Stomach (tissue), 19 donors: ENCODE measurements at regions of chr17 and their contacts with region 1.

Region 1: GRCh38 chr17:77109764-77110359 is 30.9 kb upstream of the SEC14L1 start:
- DNase-seq: peak in 1 of 2 donors; percentile 62
- H3K4me3 ChIP-seq: no peak overlapping the region
- H3K27ac ChIP-seq: peak overlapping the region; percentile 4 to 75 (median 69)
- H3K4me1 ChIP-seq: peaks cover 10 to 39% (median 26%) of the 10 kb centered on the region in 4 donors
- H3K27me3 ChIP-seq: no peaks in the 10 kb centered on the region
- CTCF ChIP-seq: no peak
- EP300 ChIP-seq: no peak
- POLR2A ChIP-seq: no peak

Region 2: GRCh38 chr17:77153472-77153871 is 43.6 kb after region 1 on chr17:
- intact Hi-C with region 1: loop called (anchors 10 kb)
- DNase-seq: no peak
- H3K4me3 ChIP-seq: no peak overlapping the region
- H3K27ac ChIP-seq: peak overlapping the region in 4 of 5 donors; percentile 36 to 65 (median 57)
- H3K4me1 ChIP-seq: peaks cover 42 to 90% (median 64%) of the 10 kb centered on the region in 4 donors
- H3K27me3 ChIP-seq: no peaks in the 10 kb centered on the region
- CTCF ChIP-seq: no peak
- EP300 ChIP-seq: no peak
- POLR2A ChIP-seq: no peak

Region 3: DNA sequence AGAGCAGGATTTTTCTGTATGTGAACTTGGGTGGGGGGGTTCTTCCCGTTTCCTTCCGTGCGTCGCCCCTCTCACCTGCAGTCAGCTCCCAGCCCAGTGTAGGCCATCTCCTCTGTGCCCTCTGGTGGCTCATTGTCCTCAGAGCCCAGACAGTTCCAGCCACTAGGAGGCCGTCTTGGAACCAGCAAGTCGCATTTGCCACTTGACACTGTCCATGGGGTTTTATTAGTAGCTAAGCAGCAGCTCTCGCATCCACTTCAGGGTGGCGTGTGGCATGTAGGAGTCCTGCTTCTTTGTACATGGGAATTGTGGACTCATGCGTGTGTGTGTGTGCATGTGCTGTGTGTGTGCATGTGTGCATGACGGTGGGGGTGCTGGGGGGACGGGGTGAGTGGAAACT is 104.9 kb after region 1 on chr17:
- intact Hi-C with region 1: no loop called
- DNase-seq: peak; percentile 51 to 72
- H3K4me3 ChIP-seq: no peak overlapping the region
- H3K27ac ChIP-seq: peak overlapping the region in 1 of 5 donors; percentile 12
- H3K4me1 ChIP-seq: peaks cover 6 to 24% (median 11%) of the 10 kb centered on the region in 4 donors
- H3K27me3 ChIP-seq: no peaks in the 10 kb centered on the region
- CTCF ChIP-seq: peak in 5 of 7 experiments; percentile 27 to 59 (median 49)
- EP300 ChIP-seq: no peak
- POLR2A ChIP-seq: no peak